ENCODE measurements at regions of chr3 and their contacts with region 1.

Region 1: DNA sequence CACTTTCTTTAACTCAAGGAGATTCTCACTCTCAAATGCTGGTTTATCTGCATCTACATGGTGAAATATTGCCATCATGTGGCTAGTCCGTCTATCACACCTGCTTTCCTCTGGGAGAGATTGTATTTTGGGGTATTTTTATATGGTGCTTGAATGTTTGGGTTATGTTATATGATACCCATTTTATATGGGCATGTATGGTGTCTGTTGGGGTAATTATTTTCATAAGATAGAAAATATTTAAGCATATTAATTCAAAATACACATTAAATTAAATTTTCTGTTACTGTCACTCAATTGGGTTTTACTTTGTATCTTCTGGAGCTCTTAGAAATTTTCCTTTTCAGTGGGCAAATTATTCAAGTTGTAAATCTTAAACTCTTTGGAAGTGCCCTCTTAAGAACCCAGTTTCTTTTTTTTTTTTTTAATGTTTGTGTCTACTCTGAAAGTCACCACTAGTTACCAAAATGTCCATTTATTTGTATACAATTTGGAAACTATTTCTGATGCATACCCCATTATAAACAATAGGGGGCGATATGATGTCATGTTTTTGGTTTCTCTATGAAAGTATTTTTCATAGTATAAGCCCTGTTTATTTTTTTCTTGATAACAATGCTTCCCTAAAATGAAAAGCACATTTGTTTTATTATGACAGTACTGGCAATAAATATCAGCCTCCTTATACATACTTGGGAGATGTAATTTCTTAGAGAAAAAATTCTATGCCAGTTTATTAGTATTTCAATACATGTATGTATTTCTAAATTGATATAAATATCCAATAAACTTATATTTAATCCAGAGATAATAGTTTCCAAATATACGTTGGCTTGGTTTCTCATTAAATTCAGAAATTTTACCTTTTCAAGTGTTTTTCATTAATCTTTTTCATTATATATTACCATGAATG is 36.1 kb upstream of the PLSCR5 start:
- DNase-seq: peak; percentile 25
- H3K4me3 ChIP-seq: no peak overlapping the region
- H3K27ac ChIP-seq: no peak overlapping the region
- H3K4me1 ChIP-seq: no peaks in the 10 kb centered on the region
- H3K27me3 ChIP-seq: no peaks in the 10 kb centered on the region
- CTCF ChIP-seq: peak; percentile 60 to 64

Region 2: GRCh38 chr3:146334151-146334550 is 307.1 kb before region 1 on chr3:
- CTCF ChIA-PET with region 1: no interaction called
- dilution Hi-C with region 1: no loop called
- in situ Hi-C with region 1: no loop called
- intact Hi-C with region 1: loop called (anchors 2 kb)
- DNase-seq: peak; percentile 6
- H3K4me3 ChIP-seq: no peak overlapping the region
- H3K27ac ChIP-seq: no peak overlapping the region
- H3K4me1 ChIP-seq: no peaks in the 10 kb centered on the region
- H3K27me3 ChIP-seq: no peaks in the 10 kb centered on the region
- CTCF ChIP-seq: peak in 1 of 2 donors; percentile 57